PC-9 (cell line): ENCODE measurements at regions of chr14 and their contacts with region 1.

Region 1: GRCh38 chr14:72916177-72916576 is 10.1 kb upstream of the DCAF4 start:
- DNase-seq: no peak
- H3K4me3 ChIP-seq: no peak overlapping the region
- H3K27ac ChIP-seq: no peak overlapping the region
- H3K4me1 ChIP-seq: no peaks in the 10 kb centered on the region
- H3K27me3 ChIP-seq: 0 out of 2 replicates have a peak, but pooled peaks cover 21% of the 10 kb centered on the region
- CTCF ChIP-seq: no peak

Region 2: GRCh38 chr14:72904840-72905561 is 11.2 kb before region 1 on chr14:
- CTCF ChIA-PET with region 1: interaction called, 19 read pairs
- POLR2A ChIA-PET with region 1: no interaction called
- intact Hi-C with region 1: no loop called
- DNase-seq: peak; percentile 42 to 58
- H3K4me3 ChIP-seq: no peak overlapping the region
- H3K27ac ChIP-seq: no peak overlapping the region
- H3K4me1 ChIP-seq: no peaks in the 10 kb centered on the region
- H3K27me3 ChIP-seq: peaks cover 10% of the 10 kb centered on the region
- CTCF ChIP-seq: peak; percentile 96